Activated T-helper 2 cell treated with anti-CD3 and anti-CD28 coated beads, Interferon-gamma antibody, Interleukin-2, Interleukin-4, amounts not matched to agents 10 μg/mL and 5 μg/mL and 100 μg/mL, durations not matched to agents 14 hours and 24 hours and 36 hours (primary cell): ENCODE measurements at regions of chr17 and their contacts with region 1.

Region 1: GRCh38 chr17:37123941-37124820 is 175.4 kb downstream of the AATF start:
- DNase-seq: no peak
- H3K4me3 Mint-ChIP-seq: no peak overlapping the region
- H3K27ac Mint-ChIP-seq: no peak overlapping the region
- H3K4me1 Mint-ChIP-seq: no peaks in the 10 kb centered on the region
- H3K27me3 Mint-ChIP-seq: no peaks in the 10 kb centered on the region

Region 2: GRCh38 chr17:37147301-37147812 is 23.2 kb after region 1 on chr17:
- intact Hi-C with region 1: no loop called
- DNase-seq: no peak
- H3K4me3 Mint-ChIP-seq: no peak overlapping the region
- H3K27ac Mint-ChIP-seq: peak overlapping the region; percentile 58
- H3K4me1 Mint-ChIP-seq: peaks cover 15% of the 10 kb centered on the region
- H3K27me3 Mint-ChIP-seq: no peaks in the 10 kb centered on the region

Region 3: DNA sequence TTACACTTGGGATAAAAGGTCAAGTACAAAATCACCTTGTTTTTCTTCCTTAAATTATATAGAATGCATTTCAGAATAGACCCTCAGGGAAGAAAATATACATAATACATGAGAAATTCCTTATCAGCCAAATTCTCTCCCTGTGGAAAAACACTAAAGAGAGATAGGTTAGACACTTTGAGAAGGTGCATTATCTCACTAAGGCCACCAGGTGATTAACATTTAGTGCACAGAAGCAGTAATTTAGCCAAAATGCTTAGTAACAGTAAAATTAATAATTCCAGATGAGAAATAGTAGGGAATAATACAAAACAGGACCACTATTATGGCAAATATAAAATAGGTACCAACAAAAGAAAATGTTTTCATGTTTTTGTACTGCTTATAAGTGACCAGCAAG is 66.3 kb after region 1 on chr17:
- intact Hi-C with region 1: loop called (anchors 10 kb)
- DNase-seq: no peak
- H3K4me3 Mint-ChIP-seq: no peak overlapping the region
- H3K27ac Mint-ChIP-seq: no peak overlapping the region
- H3K4me1 Mint-ChIP-seq: peaks cover 1% of the 10 kb centered on the region
- H3K27me3 Mint-ChIP-seq: no peaks in the 10 kb centered on the region